ENCODE measurements at regions of chr20 and their contacts with region 1.

Region 1: GRCh38 chr20:17995967-17996819 is 27.4 kb downstream of the MGME1 start:
- DNase-seq: no peak
- H3K4me3 ChIP-seq: no peak overlapping the region
- H3K27ac ChIP-seq: no peak overlapping the region
- H3K4me1 ChIP-seq: peaks cover 7% of the 10 kb centered on the region
- H3K27me3 ChIP-seq: no peaks in the 10 kb centered on the region
- CTCF ChIP-seq: peak; percentile 68 to 83 (median 70)
- POLR2A ChIP-seq: no peak

Region 2: GRCh38 chr20:17504898-17505635 is 491.1 kb before region 1 on chr20:
- intact Hi-C with region 1: loop called (anchors 10 kb)
- DNase-seq: no peak
- H3K4me3 ChIP-seq: peak overlapping the region; percentile 40 to 54
- H3K27ac ChIP-seq: peak overlapping the region; percentile 81
- H3K4me1 ChIP-seq: peaks cover 14% of the 10 kb centered on the region
- H3K27me3 ChIP-seq: no peaks in the 10 kb centered on the region
- CTCF ChIP-seq: peak; percentile 55 to 85 (median 72)
- POLR2A ChIP-seq: no peak

Region 3: DNA sequence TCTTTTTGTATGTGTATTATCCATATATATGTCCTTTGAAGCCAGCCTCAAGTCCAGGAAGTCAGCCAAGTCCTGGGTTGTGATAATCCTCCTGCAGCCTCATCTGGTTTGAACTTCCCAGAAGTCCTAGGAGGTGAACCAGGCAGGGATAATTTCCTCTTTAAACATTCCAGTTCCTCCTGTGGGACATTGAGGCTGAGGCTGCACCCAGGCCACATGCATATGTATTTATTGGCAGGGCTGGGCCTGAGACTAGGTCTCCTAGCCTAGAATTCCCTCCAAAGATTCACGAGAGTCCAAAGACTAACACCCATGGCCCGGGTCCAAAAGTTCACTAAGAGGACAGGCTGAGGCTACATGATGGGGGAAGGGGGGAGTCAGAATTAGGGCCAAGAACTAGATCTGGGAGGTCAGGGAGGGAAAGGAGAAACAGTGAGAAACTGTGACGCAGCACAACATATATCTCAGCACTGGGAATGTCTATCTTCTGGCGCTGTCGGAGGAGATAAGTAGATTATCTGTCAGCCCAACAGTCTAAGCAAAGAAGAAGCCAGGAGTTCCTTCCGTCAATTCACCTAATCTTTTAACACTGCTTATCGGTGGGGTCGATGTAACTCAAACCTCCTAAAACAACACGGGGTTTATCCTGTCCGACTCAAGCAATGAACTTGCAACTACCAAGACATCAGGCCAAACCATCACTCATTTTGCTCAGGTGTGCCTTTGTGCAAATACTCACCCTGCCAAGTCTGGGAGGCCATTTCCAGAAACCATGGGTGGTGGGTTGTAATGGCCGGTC is 70.9 kb before region 1 on chr20:
- intact Hi-C with region 1: no loop called
- DNase-seq: no peak
- H3K4me3 ChIP-seq: no peak overlapping the region
- H3K27ac ChIP-seq: no peak overlapping the region
- H3K4me1 ChIP-seq: no peaks in the 10 kb centered on the region
- H3K27me3 ChIP-seq: no peaks in the 10 kb centered on the region
- CTCF ChIP-seq: no peak
- POLR2A ChIP-seq: no peak